ENCODE measurements at regions of chr4 and their contacts with region 1.

Region 1: DNA sequence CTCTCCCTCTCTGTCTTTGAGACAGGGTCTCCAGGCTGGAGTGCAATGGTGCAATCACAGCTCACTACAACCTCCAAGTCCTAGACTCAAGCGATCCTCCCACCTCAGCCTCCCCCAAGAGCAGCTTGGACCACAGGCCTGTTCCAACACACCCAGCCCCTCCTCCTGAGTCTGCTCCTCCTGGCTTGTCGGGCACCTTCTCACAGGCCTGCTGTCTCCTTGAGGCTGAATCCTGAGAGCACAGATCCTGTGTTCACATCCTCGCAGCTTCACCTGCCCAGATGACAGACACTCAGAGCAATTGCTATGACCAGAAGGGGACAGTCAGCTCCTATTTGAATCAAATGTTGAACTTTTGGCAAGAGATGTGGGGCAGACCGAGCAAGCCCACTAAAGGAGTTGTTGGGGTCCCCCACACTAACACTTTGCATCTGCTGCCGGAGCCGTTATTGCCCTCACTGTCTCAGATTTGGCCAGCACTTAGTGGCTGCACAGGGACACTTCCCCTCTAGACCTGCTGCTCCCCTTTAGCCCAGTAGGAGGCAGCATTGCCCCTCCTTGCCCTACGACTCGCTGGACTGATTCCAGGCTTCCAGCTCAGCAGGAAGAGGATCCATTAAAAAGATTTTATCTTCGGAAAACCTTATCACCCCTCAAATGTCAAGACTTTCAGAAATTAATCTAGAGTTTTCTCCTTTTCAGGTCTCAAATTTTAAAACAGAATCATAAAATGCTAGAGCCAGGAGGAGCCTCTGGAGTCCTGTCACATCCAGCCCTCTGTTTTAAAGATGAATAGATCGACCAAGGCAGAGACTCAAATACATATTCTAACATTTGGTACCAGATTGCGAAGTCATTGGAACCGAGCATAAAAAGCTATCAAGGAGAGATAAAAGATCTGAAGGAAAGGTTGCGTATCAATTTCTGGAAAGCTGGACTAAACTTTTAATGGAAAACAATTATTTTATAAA is 113.7 kb downstream of the USP46 start:
- DNase-seq: peak; percentile 68 to 85 (median 77)
- ATAC-seq: peak; percentile 65 to 88 (median 80)
- H3K4me3 ChIP-seq: peak overlapping the region in 4 of 12 donors; percentile 5 to 43 (median 30)
- H3K27ac ChIP-seq: peak overlapping the region in 8 of 12 donors; percentile 0 to 95 (median 70)
- H3K4me1 ChIP-seq: peaks cover 0 to 26% (median 15%) of the 10 kb centered on the region in 12 donors
- H3K27me3 ChIP-seq: no peaks in the 10 kb centered on the region
- CTCF ChIP-seq: peak; percentile 89 to 96 (median 95)
- POLR2A ChIP-seq: no peak

Region 2: DNA sequence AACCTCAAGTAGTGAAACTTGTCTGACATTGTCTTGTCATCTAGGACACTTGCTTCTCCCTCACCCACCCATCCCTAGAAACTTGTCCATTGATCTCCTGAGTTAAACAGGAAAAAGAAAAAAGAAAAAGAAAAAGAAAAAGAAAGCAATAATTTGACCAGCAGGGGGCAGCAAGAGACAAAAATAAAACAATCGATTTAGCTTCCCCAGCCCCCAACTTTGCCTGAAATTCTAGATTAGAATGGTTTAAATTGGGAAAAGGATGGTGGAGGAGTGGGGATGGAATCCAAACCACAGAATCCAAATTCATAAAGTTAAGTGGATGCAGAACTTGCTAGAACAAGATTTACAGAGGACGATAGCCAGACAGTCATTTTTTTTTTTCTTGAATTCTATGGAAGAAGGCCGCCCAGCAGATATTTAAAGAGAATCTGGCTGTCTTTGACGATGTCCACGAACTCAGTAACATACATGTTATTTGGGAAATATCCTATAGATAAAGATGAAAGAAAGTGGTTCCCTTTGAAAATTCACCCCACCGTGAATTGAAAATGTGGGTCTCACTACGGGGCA is 169.2 kb before region 1 on chr4:
- intact Hi-C with region 1: loop called in 1 of 10 experiments (anchors 10 kb)
- DNase-seq: peak in 1 of 5 donors; percentile 20
- ATAC-seq: no peak
- H3K4me3 ChIP-seq: no peak overlapping the region
- H3K27ac ChIP-seq: no peak overlapping the region
- H3K4me1 ChIP-seq: peaks cover 0 to 6% (median 0%) of the 10 kb centered on the region in 12 donors
- H3K27me3 ChIP-seq: no peaks in the 10 kb centered on the region
- CTCF ChIP-seq: peak; percentile 40 to 74 (median 62)
- POLR2A ChIP-seq: no peak

Region 3: DNA sequence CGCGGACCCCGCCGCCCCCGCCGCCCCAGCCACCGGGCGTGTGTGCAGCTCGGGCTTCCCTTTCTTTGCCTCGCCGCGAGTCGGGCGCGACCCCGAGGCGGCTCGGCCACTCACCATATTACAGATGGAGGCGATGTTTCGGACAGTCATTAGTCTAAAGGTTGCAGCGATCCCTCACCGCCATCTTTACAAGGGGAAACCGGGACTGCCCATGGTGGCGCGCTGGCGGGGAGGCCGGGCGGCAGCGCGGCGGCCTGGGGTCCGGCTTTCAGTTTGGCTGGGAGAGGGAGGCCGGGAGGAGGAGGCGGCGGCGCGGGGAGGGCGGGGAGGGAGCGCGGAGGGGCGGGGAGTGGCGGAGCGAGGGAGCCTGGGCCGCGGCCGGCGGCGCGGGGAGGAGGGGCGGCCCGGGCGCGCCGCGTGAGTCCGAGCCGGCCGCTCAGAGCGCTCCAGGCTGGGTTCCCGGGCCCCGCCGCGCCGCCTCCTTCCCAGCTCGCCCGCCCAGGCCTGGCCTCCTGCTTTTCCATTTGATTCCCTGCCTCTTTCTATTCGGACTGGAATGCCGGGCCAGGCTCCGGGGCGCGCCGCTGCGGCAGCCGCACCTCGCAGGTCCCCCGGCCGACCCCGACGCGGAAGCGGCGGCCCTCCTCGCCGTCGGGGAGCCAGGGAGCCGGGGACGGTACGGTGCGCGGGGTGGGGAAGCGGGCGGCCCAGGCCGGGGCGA is 113.8 kb after region 1 on chr4 and contains the start of gene USP46:
- intact Hi-C with region 1: loop called (anchors 2 to 10 kb)
- DNase-seq: peak; percentile 84 to 90 (median 87)
- ATAC-seq: peak; percentile 60 to 96 (median 89)
- H3K4me3 ChIP-seq: peak within 1 kb of the TSS; percentile 60 to 98 (median 91)
- H3K27ac ChIP-seq: peak within 1 kb of the TSS; percentile 94 to 100 (median 98)
- H3K4me1 ChIP-seq: peaks cover 0 to 67% (median 40%) of the 10 kb centered on the region in 12 donors
- H3K27me3 ChIP-seq: no peaks in the 10 kb centered on the region
- CTCF ChIP-seq: no peak
- POLR2A ChIP-seq: peak in 1 of 2 donors; percentile 46
- total RNA-seq, gene USP46: 29.8 to 111 (median 75.3) TPM

Region 4: GRCh38 chr4:52712172-52712990 is 167.0 kb after region 1 on chr4:
- intact Hi-C with region 1: loop called in 6 of 10 experiments (anchors 5 kb)
- DNase-seq: peak; percentile 99
- ATAC-seq: peak; percentile 97 to 100 (median 99)
- H3K4me3 ChIP-seq: peak overlapping the region; percentile 51 to 96 (median 74)
- H3K27ac ChIP-seq: peak overlapping the region; percentile 86 to 98 (median 93)
- H3K4me1 ChIP-seq: peaks cover 6 to 32% (median 24%) of the 10 kb centered on the region in 12 donors
- H3K27me3 ChIP-seq: no peaks in the 10 kb centered on the region
- CTCF ChIP-seq: no peak
- POLR2A ChIP-seq: peak; percentile 77 to 95

Region 5: DNA sequence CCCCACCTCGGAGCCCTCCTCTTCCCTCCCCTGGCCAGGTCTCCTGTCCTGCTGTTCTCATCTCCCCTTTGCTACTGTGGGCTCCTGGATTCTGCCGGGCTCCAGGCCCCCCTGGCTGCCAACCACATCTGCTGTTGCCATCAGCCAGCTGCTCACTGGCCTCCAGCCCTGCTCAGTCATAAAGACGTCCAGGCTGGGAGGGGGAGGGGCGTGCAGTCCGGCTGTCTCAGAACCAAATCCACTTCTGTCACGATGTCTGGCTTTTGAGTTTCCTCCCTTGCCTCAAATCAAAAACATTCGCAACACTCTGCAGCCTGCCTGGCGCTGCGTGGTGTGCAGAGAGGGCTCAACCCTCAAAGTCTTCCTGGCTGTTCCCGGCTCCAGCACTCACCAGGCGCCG is 323.8 kb after region 1 on chr4:
- intact Hi-C with region 1: loop called in 7 of 10 experiments (anchors 5 to 10 kb)
- DNase-seq: peak; percentile 74 to 86 (median 81)
- ATAC-seq: peak; percentile 34 to 69 (median 55)
- H3K4me3 ChIP-seq: peak overlapping the region in 1 of 12 donors; percentile 6
- H3K27ac ChIP-seq: peak overlapping the region in 10 of 12 donors; percentile 34 to 81 (median 58)
- H3K4me1 ChIP-seq: peaks cover 0 to 76% (median 47%) of the 10 kb centered on the region in 12 donors
- H3K27me3 ChIP-seq: no peaks in the 10 kb centered on the region
- CTCF ChIP-seq: no peak
- POLR2A ChIP-seq: no peak

Measured in heart left ventricle (tissue), 16 donors.